Activated CD4-positive, alpha-beta memory T cell treated with anti-CD3 and anti-CD28 coated beads for 36 hours (primary cell): ENCODE measurements at regions of chr2 and their contacts with region 1.

Region 1: DNA sequence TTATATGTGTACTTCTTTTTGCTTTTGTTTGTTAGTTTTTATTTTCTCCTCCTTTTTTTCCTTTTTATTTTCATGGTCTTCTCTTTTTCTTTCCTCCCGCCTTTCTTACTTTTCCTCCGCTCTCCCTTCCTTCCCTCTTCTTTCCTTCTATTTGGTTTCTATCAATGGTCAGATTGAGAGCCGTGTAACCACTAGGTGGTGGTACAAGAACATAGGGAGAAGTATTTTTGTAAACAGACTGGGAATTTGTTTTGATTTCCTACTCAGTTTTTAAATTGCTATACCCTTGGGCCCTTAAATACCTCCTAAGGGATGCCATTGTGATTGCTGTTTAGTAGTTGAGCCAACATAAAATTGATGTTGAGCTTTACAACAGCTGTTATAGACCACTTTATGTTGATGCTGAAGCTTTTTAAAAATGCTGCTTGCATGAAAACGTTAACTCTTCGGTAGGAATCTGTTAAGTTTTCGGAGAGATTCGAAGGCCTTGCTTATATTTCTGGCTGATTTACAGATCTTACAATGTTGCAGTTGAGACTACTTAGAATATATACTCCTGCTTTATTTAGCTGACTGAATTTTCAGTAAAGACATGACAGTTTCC is 124.2 kb downstream of the UBE2E3 start:
- DNase-seq: no peak
- H3K4me3 Mint-ChIP-seq: no peak overlapping the region
- H3K27ac Mint-ChIP-seq: no peak overlapping the region
- H3K4me1 Mint-ChIP-seq: peaks cover 44% of the 10 kb centered on the region
- H3K27me3 Mint-ChIP-seq: no peaks in the 10 kb centered on the region

Region 2: GRCh38 chr2:180625006-180625844 is 479.4 kb before region 1 on chr2:
- CTCF ChIA-PET with region 1: no interaction called
- POLR2A ChIA-PET with region 1: no interaction called
- intact Hi-C with region 1: no loop called
- DNase-seq: no peak
- H3K4me3 Mint-ChIP-seq: no peak overlapping the region
- H3K27ac Mint-ChIP-seq: no peak overlapping the region
- H3K4me1 Mint-ChIP-seq: no peaks in the 10 kb centered on the region
- H3K27me3 Mint-ChIP-seq: peaks cover 1% of the 10 kb centered on the region

Region 3: GRCh38 chr2:181077128-181077709 is 27.4 kb before region 1 on chr2:
- CTCF ChIA-PET with region 1: interaction called, 3 read pairs
- POLR2A ChIA-PET with region 1: no interaction called
- intact Hi-C with region 1: loop called (anchors 1 kb)
- DNase-seq: no peak
- H3K4me3 Mint-ChIP-seq: no peak overlapping the region
- H3K27ac Mint-ChIP-seq: no peak overlapping the region
- H3K4me1 Mint-ChIP-seq: peaks cover 7% of the 10 kb centered on the region
- H3K27me3 Mint-ChIP-seq: no peaks in the 10 kb centered on the region

Region 4: DNA sequence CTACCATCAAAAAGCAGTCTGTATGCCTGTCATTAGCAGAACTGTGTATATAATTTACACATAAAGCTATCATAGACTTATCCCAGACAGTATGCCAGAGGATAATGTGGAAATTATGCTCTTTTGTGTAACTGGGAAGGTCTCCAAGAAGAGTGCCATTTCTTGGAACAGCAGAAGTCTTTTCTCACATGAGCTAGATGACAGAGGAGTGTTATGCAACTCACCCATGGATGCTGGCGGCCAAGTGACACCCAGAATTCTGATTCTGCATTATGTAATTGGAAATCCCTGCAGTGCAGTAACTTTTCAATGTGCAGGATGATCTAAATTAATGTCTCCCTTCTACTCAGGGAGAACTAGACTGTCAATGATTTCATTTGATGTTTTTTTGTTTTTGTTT is 35.8 kb after region 1 on chr2:
- CTCF ChIA-PET with region 1: interaction called, 11 read pairs
- POLR2A ChIA-PET with region 1: interaction called, 3 read pairs
- intact Hi-C with region 1: loop called (anchors 1 kb)
- DNase-seq: no peak
- H3K4me3 Mint-ChIP-seq: peak overlapping the region; percentile 3
- H3K27ac Mint-ChIP-seq: peak overlapping the region; percentile 74
- H3K4me1 Mint-ChIP-seq: peaks cover 63% of the 10 kb centered on the region
- H3K27me3 Mint-ChIP-seq: no peaks in the 10 kb centered on the region

Region 5: DNA sequence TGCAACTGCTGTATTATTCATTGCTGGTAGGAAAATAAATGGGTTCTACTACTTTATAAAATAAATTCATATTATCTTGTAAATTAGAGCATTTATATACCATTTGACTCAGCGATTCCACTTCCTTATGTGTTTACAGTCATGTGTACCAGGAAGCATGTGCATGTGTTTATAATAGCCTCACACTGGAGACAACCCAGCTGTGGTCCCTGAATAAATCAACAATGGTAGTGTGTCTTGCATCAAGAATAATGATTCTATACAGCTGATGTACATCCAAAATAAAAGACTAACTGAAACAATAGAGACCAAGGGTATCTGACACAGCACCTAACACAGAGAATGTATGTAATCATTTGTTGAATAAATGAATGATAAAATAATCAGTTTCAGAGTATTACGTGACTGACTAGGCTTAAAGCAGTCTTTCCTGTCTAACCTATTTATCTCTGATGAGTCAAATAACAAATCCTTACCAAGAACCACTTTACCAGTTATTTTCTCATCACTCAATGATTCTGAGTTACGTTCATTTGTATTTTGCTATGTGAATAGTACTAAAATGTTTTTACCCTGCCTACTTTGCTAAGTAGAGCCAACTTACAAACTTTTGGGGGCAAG is 92.6 kb after region 1 on chr2:
- CTCF ChIA-PET with region 1: interaction called, 4 read pairs
- POLR2A ChIA-PET with region 1: no interaction called
- intact Hi-C with region 1: loop called (anchors 1 kb)
- DNase-seq: no peak
- H3K4me3 Mint-ChIP-seq: peak overlapping the region; percentile 6
- H3K27ac Mint-ChIP-seq: peak overlapping the region; percentile 85
- H3K4me1 Mint-ChIP-seq: peaks cover 51% of the 10 kb centered on the region
- H3K27me3 Mint-ChIP-seq: no peaks in the 10 kb centered on the region

Region 6: GRCh38 chr2:181305301-181306123 is 200.9 kb after region 1 on chr2:
- CTCF ChIA-PET with region 1: interaction called, 13 read pairs
- POLR2A ChIA-PET with region 1: no interaction called
- intact Hi-C with region 1: loop called (anchors 1 kb)
- DNase-seq: peak; percentile 69
- H3K4me3 Mint-ChIP-seq: peak overlapping the region; percentile 48
- H3K27ac Mint-ChIP-seq: peak overlapping the region; percentile 97
- H3K4me1 Mint-ChIP-seq: peaks cover 74% of the 10 kb centered on the region
- H3K27me3 Mint-ChIP-seq: no peaks in the 10 kb centered on the region

Region 7: DNA sequence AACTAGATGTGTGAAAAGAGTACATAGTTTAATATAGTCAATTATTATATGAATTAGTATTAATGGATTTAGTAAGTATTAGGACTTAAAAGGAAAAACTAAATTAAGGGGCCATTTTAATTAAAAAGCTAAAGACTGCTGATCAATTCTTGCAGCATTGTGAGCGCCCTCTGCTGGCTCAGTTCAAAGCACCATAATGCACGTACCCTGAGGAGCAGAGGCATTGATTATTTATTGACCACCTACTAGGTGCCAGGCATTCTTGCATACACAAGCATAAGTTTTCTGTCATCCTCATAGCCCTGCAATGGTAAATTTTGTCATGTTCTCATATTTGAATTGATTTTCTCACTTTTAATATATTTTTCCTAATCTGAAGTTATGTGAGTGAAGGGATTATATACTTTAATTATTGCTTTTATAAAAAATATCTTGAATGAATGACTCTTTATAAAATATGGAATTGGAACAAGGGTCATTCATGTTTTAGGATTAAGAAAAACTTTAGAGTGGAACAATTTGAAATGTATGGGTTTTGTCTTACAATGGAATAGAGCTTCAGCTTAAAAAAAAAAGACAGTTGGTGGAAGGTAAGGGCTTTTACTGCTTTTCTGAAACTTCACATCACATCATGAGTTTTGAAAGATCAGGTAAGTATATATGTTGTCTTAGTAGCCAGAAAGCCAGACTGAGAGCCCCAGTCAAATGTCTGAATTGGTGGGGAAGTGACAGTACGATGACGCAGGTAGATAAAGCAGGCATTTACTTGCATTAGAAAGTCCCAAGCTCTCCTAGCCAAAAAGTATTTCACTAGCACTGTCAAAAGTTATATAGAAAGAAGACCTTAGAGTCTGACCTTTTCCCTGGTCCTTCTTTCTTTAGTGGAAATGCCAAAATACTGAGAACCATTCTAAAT is 362.3 kb after region 1 on chr2:
- CTCF ChIA-PET with region 1: interaction called, 81 read pairs
- POLR2A ChIA-PET with region 1: interaction called, 6 read pairs
- intact Hi-C with region 1: loop called (anchors 1 kb)
- DNase-seq: peak; percentile 83
- H3K4me3 Mint-ChIP-seq: no peak overlapping the region
- H3K27ac Mint-ChIP-seq: peak overlapping the region; percentile 77
- H3K4me1 Mint-ChIP-seq: peaks cover 84% of the 10 kb centered on the region
- H3K27me3 Mint-ChIP-seq: no peaks in the 10 kb centered on the region

Region 8: GRCh38 chr2:181891966-181892798 is 787.6 kb after region 1 on chr2:
- CTCF ChIA-PET with region 1: no interaction called
- POLR2A ChIA-PET with region 1: no interaction called
- intact Hi-C with region 1: loop called (anchors 10 kb)
- DNase-seq: peak; percentile 68
- H3K4me3 Mint-ChIP-seq: peak overlapping the region; percentile 96
- H3K27ac Mint-ChIP-seq: peak overlapping the region; percentile 77
- H3K4me1 Mint-ChIP-seq: peaks cover 23% of the 10 kb centered on the region
- H3K27me3 Mint-ChIP-seq: peaks cover 7% of the 10 kb centered on the region